Spleen (tissue), 13 donors: ENCODE measurements at regions of chr17 and their contacts with region 1.

Region 1: GRCh38 chr17:36072431-36073121 is 8.5 kb downstream of the CCL18 start:
- DNase-seq: peak; percentile 88
- H3K4me3 ChIP-seq: no peak overlapping the region
- H3K27ac ChIP-seq: peak overlapping the region in 5 of 8 donors; percentile 19 to 84 (median 74)
- H3K4me1 ChIP-seq: peaks cover 0 to 23% (median 5%) of the 10 kb centered on the region in 6 donors
- H3K27me3 ChIP-seq: no peaks in the 10 kb centered on the region
- CTCF ChIP-seq: peak; percentile 53 to 87 (median 78)
- POLR2A ChIP-seq: no peak

Region 2: DNA sequence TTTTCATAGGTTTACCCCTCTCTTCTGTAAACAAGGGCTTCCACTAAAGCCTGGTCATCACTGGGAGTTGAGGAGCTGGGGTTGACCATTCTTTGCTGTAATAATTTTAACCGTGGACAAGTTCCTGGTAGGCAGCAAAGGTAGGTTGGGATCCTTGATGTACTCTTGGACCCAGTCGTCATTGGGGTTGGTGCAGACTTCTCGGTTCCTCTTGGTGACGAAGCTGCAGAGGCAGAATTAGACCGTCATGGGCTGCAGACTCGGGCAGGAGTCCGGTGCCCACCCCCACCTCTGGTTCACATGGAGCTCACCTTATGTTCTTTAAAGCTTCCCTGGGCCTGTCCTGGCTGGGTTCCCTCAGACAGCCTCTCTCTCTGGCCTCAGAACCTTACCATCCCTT is 95.1 kb before region 1 on chr17:
- intact Hi-C with region 1: loop called (anchors 5 kb)
- DNase-seq: no peak
- H3K4me3 ChIP-seq: no peak overlapping the region
- H3K27ac ChIP-seq: peak overlapping the region in 1 of 8 donors; percentile 7
- H3K4me1 ChIP-seq: peaks cover 0 to 43% (median 22%) of the 10 kb centered on the region in 6 donors
- H3K27me3 ChIP-seq: no peaks in the 10 kb centered on the region
- CTCF ChIP-seq: no peak
- POLR2A ChIP-seq: no peak

Region 3: GRCh38 chr17:36198831-36199465 is 126.4 kb after region 1 on chr17:
- intact Hi-C with region 1: no loop called
- DNase-seq: no peak
- H3K4me3 ChIP-seq: no peak overlapping the region
- H3K27ac ChIP-seq: peak overlapping the region in 5 of 8 donors; percentile 39 to 66 (median 58)
- H3K4me1 ChIP-seq: peaks cover 0 to 88% (median 60%) of the 10 kb centered on the region in 6 donors
- H3K27me3 ChIP-seq: no peaks in the 10 kb centered on the region
- CTCF ChIP-seq: no peak
- POLR2A ChIP-seq: no peak